ENCODE measurements at regions of chr9 and their contacts with region 1.

Region 1: GRCh38 chr9:136567651-136568287 is 21.9 kb upstream of the NOTCH1 start:
- DNase-seq: peak; percentile 81
- ATAC-seq: peak; percentile 86
- H3K4me3 ChIP-seq: no peak overlapping the region
- H3K27ac ChIP-seq: peak overlapping the region; percentile 42
- H3K4me1 ChIP-seq: peaks cover 38% of the 10 kb centered on the region
- H3K27me3 ChIP-seq: no peaks in the 10 kb centered on the region
- CTCF ChIP-seq: no peak
- POLR2A ChIP-seq: no peak
- RAD21 ChIP-seq: no peak

Region 2: DNA sequence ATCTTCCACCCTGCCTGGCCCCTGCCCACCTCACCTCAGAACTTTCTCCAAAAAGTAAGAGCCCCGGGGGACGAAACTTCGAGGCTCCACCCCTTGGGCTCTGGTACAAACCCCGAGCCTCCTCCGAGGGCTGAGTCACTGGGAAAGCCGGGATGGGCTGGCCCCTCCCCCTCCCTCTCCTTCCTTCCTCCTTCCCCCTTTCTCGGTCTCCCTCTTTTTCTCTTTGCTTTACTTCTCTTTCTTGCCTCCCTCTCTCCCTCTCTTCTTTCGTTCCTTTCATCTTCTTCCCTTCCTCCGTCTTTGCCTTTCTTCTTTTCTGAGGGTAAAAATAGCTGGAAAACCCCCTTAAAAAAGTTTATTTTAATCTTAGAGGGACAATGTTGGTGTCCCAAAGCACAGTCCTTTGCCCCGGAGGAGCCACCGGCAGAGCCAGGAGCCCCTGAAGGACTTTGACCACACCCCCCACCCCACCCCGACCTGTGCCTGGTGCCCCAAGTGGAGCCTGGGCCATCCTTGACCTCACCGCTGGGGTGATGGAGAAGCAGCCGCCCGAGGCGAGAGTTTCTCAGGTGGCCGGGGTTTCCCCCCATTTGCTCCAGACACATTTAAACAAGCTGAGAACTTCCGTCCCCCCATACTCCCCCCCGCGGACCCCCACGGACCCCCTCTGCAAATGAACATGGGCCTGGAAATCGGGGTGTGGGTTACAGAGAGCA is 16.2 kb before region 1 on chr9:
- CTCF ChIA-PET with region 1: no interaction called
- POLR2A ChIA-PET with region 1: interaction called, 20 read pairs
- dilution Hi-C with region 1: no loop called
- in situ Hi-C with region 1: no loop called
- intact Hi-C with region 1: loop called (anchors 1 kb)
- DNase-seq: peak; percentile 64
- ATAC-seq: peak; percentile 72
- H3K4me3 ChIP-seq: no peak overlapping the region
- H3K27ac ChIP-seq: peak overlapping the region; percentile 78
- H3K4me1 ChIP-seq: peaks cover 37% of the 10 kb centered on the region
- H3K27me3 ChIP-seq: no peaks in the 10 kb centered on the region
- CTCF ChIP-seq: no peak
- POLR2A ChIP-seq: no peak
- RAD21 ChIP-seq: no peak

Measured in IMR-90 (cell line).